Left cardiac atrium (tissue), 4 donors: ENCODE measurements at regions of chr22 and their contacts with region 1.

Region 1: GRCh38 chr22:37797874-37798500 is 9.7 kb upstream of the GCAT start:
- DNase-seq: no peak
- ATAC-seq: no peak

Region 2: DNA sequence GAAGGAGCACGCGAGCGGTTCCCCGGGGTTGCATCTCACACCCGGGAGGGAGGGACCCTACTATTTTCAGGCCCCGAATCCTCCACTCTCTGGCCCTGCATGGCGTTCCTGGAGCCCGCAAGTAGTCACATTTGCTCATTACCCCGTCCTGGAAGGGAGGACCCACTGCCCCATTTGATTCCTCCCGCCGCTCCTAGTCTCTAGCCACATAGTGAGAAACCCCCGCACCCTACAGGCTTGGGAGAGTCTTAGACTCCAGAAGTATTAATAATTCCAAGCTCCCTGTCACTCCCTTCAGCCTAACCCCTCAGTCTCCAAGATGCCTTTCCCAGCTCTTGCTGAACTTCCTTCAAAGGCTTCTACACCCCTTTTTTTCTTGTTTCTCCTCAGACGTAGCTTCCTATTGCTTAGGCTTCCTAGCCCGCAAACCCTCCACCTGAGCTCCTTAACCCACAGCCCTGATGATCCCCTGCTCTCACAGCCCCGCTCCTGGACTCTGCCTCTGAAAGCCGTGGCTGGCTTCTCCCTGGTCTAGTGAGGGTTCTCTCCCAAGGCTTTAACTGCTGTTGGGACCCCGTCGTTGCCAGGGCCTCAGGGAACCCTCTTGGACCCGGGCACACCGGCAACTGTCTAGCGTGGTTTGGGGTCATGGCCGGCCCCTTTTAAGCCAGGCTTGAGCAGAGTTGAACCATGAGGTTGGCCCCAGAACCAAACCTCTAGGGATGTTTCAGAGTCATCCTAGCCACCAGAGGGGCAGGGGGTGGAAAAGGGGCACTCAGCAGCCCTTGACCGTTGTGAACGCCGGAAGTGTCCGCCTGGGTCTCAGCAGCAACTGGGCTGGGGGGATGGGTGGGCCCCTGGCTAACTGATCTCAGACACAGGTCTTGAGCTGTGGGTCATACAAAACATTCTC is 188.5 kb before region 1 on chr22:
- intact Hi-C with region 1: no loop called
- DNase-seq: no peak
- ATAC-seq: no peak

Region 3: GRCh38 chr22:37643225-37643847 is 154.7 kb before region 1 on chr22:
- intact Hi-C with region 1: loop called (anchors 10 kb)
- DNase-seq: peak; percentile 86
- ATAC-seq: peak; percentile 76 to 81

Region 4: GRCh38 chr22:37701141-37701786 is 96.7 kb before region 1 on chr22:
- intact Hi-C with region 1: loop called in 1 of 2 experiments (anchors 10 kb)
- DNase-seq: no peak
- ATAC-seq: no peak